ENCODE measurements at regions of chr10 and their contacts with region 1.

Region 1: DNA sequence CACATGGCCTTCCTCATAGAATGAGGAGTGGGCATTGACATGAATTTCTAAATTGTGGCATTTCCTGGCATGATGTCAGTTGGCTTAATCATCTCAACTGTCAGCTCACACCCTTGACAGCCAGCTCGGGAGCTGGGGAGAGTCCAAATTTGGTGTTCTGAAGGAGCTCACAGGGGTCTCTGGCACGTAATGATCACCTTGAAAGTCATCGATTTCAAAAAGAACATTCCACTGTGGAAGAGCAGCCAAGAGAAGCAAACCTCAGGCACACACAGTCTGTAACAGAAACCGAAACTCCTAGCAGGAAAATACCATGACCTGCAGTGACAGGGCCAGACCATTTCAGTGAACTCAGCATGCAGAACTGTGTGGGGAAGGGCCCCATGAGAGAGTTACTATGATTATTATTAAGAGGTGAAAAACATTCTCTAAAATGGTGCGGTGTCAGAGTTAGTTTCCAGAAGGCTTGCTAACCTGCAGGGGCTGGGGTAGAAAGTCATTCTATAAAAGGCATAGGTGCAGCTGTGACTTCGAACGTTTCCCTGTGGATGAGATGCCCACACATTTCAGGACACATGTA is 26.4 kb upstream of the KLF6 start:
- DNase-seq: peak; percentile 68
- H3K4me3 Mint-ChIP-seq: peak overlapping the region; percentile 64
- H3K27ac Mint-ChIP-seq: peak overlapping the region; percentile 95
- H3K4me1 Mint-ChIP-seq: peaks cover 86% of the 10 kb centered on the region
- H3K27me3 Mint-ChIP-seq: no peaks in the 10 kb centered on the region

Region 2: GRCh38 chr10:3319811-3320226 is 491.6 kb before region 1 on chr10:
- CTCF ChIA-PET with region 1: no interaction called
- POLR2A ChIA-PET with region 1: interaction called, 10 read pairs
- DNase-seq: no peak
- H3K4me3 Mint-ChIP-seq: no peak overlapping the region
- H3K27ac Mint-ChIP-seq: no peak overlapping the region
- H3K4me1 Mint-ChIP-seq: no peaks in the 10 kb centered on the region
- H3K27me3 Mint-ChIP-seq: peaks cover 4% of the 10 kb centered on the region

Region 3: GRCh38 chr10:3714531-3714930 is 96.8 kb before region 1 on chr10:
- CTCF ChIA-PET with region 1: no interaction called
- POLR2A ChIA-PET with region 1: no interaction called
- DNase-seq: no peak
- H3K4me3 Mint-ChIP-seq: no peak overlapping the region
- H3K27ac Mint-ChIP-seq: no peak overlapping the region
- H3K4me1 Mint-ChIP-seq: no peaks in the 10 kb centered on the region
- H3K27me3 Mint-ChIP-seq: peaks cover 4% of the 10 kb centered on the region

Region 4: GRCh38 chr10:3757638-3758490 is 53.5 kb before region 1 on chr10:
- CTCF ChIA-PET with region 1: interaction called, 3 read pairs
- POLR2A ChIA-PET with region 1: interaction called, 10 read pairs
- DNase-seq: peak; percentile 61
- H3K4me3 Mint-ChIP-seq: peak overlapping the region; percentile 12
- H3K27ac Mint-ChIP-seq: peak overlapping the region; percentile 92
- H3K4me1 Mint-ChIP-seq: peaks cover 75% of the 10 kb centered on the region
- H3K27me3 Mint-ChIP-seq: no peaks in the 10 kb centered on the region

Region 5: GRCh38 chr10:3844491-3845025 is 33.2 kb after region 1 on chr10:
- CTCF ChIA-PET with region 1: no interaction called
- POLR2A ChIA-PET with region 1: no interaction called
- DNase-seq: no peak
- H3K4me3 Mint-ChIP-seq: no peak overlapping the region
- H3K27ac Mint-ChIP-seq: no peak overlapping the region
- H3K4me1 Mint-ChIP-seq: peaks cover under 1% of the 10 kb centered on the region
- H3K27me3 Mint-ChIP-seq: no peaks in the 10 kb centered on the region

Region 6: GRCh38 chr10:3919709-3920308 is 108.4 kb after region 1 on chr10:
- CTCF ChIA-PET with region 1: no interaction called
- POLR2A ChIA-PET with region 1: no interaction called
- DNase-seq: no peak
- H3K4me3 Mint-ChIP-seq: no peak overlapping the region
- H3K27ac Mint-ChIP-seq: no peak overlapping the region
- H3K4me1 Mint-ChIP-seq: no peaks in the 10 kb centered on the region
- H3K27me3 Mint-ChIP-seq: peaks cover 2% of the 10 kb centered on the region

Region 7: GRCh38 chr10:3995302-3996210 is 184.2 kb after region 1 on chr10:
- CTCF ChIA-PET with region 1: no interaction called
- POLR2A ChIA-PET with region 1: no interaction called
- DNase-seq: no peak
- H3K4me3 Mint-ChIP-seq: no peak overlapping the region
- H3K27ac Mint-ChIP-seq: no peak overlapping the region
- H3K4me1 Mint-ChIP-seq: peaks cover 5% of the 10 kb centered on the region
- H3K27me3 Mint-ChIP-seq: no peaks in the 10 kb centered on the region